GM12878 (cell line): ENCODE measurements at regions of chr10 and their contacts with region 1.

Region 1: DNA sequence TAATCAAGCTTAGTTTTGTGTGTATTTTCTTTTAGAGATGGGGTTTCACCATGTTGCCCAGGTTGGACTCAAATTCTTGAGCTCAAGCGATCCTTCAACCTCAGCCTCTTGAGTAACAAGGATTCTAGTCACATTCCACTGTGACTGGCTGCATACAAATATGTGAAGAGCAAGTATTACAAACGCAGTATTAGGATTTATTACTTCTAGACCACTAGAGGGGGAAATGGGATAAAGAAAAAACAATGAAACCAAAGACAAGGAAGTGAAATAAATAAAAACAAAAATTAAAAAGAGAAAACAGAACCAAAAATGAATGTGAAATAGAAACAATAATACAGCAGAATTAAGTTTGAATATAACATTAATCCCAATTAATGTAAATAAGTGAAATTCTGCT is 308.7 kb downstream of the ANKRD30A start:
- DNase-seq: no peak
- ATAC-seq: no peak
- H3K4me3 ChIP-seq: no peak overlapping the region
- H3K27ac ChIP-seq: no peak overlapping the region
- H3K4me1 ChIP-seq: no peaks in the 10 kb centered on the region
- H3K27me3 ChIP-seq: no peaks in the 10 kb centered on the region
- CTCF ChIP-seq: peak in 1 of 3 experiments; percentile 17; a peak in 1 of 6 replicates
- EP300 ChIP-seq: no peak
- POLR2A ChIP-seq: no peak
- RAD21 ChIP-seq: no peak

Region 2: DNA sequence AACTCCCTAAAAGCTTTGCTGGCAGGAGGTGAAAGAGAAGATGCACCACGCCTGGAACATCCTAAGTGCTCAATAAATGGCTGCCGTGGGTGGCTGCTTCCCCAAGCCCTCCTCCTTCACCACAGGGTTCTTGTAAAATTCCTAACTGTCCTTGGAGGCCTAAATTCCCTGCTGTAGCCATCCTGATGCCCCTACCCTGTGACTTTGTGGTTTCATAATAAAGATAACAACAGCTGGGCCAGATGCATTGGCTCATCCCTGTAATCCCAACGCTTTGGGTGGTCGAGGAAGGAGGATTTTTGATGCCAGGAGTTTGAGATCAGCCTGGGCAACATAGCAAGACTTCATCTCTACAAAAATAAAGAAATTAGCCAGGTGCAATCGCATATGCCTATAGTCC is 33.2 kb after region 1 on chr10:
- CTCF ChIA-PET with region 1: no interaction called
- POLR2A ChIA-PET with region 1: no interaction called
- RAD21 ChIA-PET with region 1: no interaction called
- SMC1A ChIA-PET with region 1: no interaction called
- in situ Hi-C with region 1: no loop called
- intact Hi-C with region 1: no loop called
- DNase-seq: no peak
- ATAC-seq: no peak
- H3K4me3 ChIP-seq: no peak overlapping the region
- H3K27ac ChIP-seq: no peak overlapping the region
- H3K4me1 ChIP-seq: no peaks in the 10 kb centered on the region
- H3K27me3 ChIP-seq: no peaks in the 10 kb centered on the region
- CTCF ChIP-seq: no peak
- EP300 ChIP-seq: no peak
- POLR2A ChIP-seq: no peak
- RAD21 ChIP-seq: no peak

Region 3: GRCh38 chr10:37488792-37489657 is 54.9 kb after region 1 on chr10:
- CTCF ChIA-PET with region 1: interaction called, 3 read pairs
- POLR2A ChIA-PET with region 1: no interaction called
- RAD21 ChIA-PET with region 1: interaction called, 10 read pairs
- SMC1A ChIA-PET with region 1: interaction called, 3 read pairs
- in situ Hi-C with region 1: no loop called
- intact Hi-C with region 1: no loop called
- DNase-seq: no peak
- ATAC-seq: no peak
- H3K4me3 ChIP-seq: no peak overlapping the region
- H3K27ac ChIP-seq: no peak overlapping the region
- H3K4me1 ChIP-seq: no peaks in the 10 kb centered on the region
- H3K27me3 ChIP-seq: no peaks in the 10 kb centered on the region
- CTCF ChIP-seq: no peak
- EP300 ChIP-seq: no peak
- POLR2A ChIP-seq: no peak
- RAD21 ChIP-seq: no peak

Region 4: GRCh38 chr10:37495415-37495814 is 61.3 kb after region 1 on chr10:
- CTCF ChIA-PET with region 1: interaction called, 50 read pairs
- POLR2A ChIA-PET with region 1: no interaction called
- RAD21 ChIA-PET with region 1: interaction called, 22 read pairs
- SMC1A ChIA-PET with region 1: interaction called, 16 read pairs
- in situ Hi-C with region 1: no loop called
- intact Hi-C with region 1: no loop called
- DNase-seq: no peak
- ATAC-seq: no peak
- H3K4me3 ChIP-seq: no peak overlapping the region
- H3K27ac ChIP-seq: no peak overlapping the region
- H3K4me1 ChIP-seq: no peaks in the 10 kb centered on the region
- H3K27me3 ChIP-seq: no peaks in the 10 kb centered on the region
- CTCF ChIP-seq: 0 out of 6 replicates have a peak, but pooled peaks of 1 of the 3 experiments have one; percentile 8
- EP300 ChIP-seq: no peak
- POLR2A ChIP-seq: no peak
- RAD21 ChIP-seq: 0 out of 2 replicates have a peak, but pooled peaks have one; percentile 20

Region 5: GRCh38 chr10:37885850-37886249 is 451.8 kb after region 1 on chr10:
- CTCF ChIA-PET with region 1: no interaction called
- POLR2A ChIA-PET with region 1: no interaction called
- RAD21 ChIA-PET with region 1: no interaction called
- SMC1A ChIA-PET with region 1: no interaction called
- in situ Hi-C with region 1: no loop called
- intact Hi-C with region 1: no loop called
- DNase-seq: no peak
- ATAC-seq: no peak
- H3K4me3 ChIP-seq: no peak overlapping the region
- H3K27ac ChIP-seq: no peak overlapping the region
- H3K4me1 ChIP-seq: no peaks in the 10 kb centered on the region
- H3K27me3 ChIP-seq: no peaks in the 10 kb centered on the region
- CTCF ChIP-seq: no peak
- EP300 ChIP-seq: no peak
- POLR2A ChIP-seq: no peak
- RAD21 ChIP-seq: no peak